ENCODE measurements at regions of chr3 and their contacts with region 1.

Region 1: GRCh38 chr3:13364602-13365271 is 55.4 kb downstream of the NUP210 start:
- DNase-seq: no peak
- H3K4me3 ChIP-seq: no peak overlapping the region
- H3K27ac ChIP-seq: no peak overlapping the region
- H3K4me1 ChIP-seq: no peaks in the 10 kb centered on the region
- H3K27me3 ChIP-seq: no peaks in the 10 kb centered on the region
- CTCF ChIP-seq: no peak

Region 2: DNA sequence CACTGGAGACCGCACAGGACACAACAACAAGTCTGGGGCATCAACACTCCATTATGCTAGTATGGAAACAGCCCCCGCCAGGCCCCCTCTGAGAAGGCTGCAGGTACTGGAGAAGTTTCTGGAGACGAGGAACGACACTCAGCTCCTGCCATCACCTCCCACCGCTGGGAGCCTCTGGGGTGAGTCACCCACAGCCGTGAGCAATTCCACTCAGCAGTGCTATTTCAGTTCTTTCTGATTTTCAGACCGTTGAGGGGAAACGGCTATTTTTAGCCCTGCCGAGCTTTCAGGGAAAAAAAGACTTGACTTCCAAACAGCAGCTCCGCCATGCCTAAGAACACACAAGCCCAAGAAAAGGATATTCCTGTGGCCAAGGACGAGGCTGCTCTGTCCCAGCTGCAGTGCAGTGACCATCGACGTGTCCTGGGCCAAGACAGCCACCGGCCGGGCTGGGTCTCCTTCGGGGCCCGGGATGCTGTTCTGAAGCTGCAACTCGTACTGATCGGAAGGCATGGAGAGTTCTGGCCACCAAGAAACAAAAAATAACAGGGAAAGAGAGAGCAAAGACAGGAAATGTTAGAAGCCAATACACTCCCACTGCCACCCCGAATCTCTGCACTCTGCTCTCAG is 14.6 kb after region 1 on chr3:
- CTCF ChIA-PET with region 1: interaction called, 11 read pairs
- dilution Hi-C with region 1: no loop called
- in situ Hi-C with region 1: no loop called
- intact Hi-C with region 1: no loop called
- DNase-seq: no peak
- H3K4me3 ChIP-seq: no peak overlapping the region
- H3K27ac ChIP-seq: no peak overlapping the region
- H3K4me1 ChIP-seq: no peaks in the 10 kb centered on the region
- H3K27me3 ChIP-seq: no peaks in the 10 kb centered on the region
- CTCF ChIP-seq: no peak

Region 3: DNA sequence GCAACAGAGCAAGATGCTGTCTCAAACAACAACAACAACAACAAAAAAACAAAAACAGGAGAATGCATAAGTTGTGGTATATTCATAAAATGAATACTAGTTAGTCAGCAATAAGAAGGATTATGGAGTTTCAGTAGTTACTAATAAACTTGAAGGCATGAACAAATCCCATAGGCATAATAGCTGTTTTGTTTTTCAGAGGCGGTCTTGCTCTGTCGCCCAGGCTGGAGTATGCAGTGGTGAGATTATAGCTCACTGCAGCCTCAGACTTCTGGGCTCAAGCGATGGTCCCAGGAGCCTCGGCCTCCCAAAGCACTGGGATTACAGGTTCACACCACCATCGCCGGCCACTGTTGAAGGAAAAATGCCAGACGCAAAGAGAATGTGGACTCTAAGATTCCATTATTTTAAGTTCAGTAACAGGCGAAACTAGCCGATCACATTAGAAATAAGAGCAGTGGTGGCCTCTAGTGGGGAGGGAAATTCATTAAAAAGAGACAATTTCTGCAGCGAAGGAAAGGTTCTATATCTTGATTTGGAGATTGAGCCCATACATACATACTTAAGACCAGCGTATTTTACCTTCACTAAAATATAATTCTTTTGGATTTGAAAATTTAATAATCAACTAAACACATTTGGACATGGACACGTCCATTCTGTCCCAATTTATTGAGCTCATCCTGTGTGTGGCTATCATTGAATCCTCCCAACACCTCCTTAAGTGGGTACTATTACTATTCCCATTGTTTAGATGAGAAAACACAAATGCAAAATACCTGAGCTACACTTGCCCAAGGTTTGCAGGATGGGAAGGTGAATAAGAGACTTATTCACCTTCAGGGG is 88.0 kb after region 1 on chr3:
- CTCF ChIA-PET with region 1: no interaction called
- dilution Hi-C with region 1: no loop called
- in situ Hi-C with region 1: no loop called
- intact Hi-C with region 1: no loop called
- DNase-seq: peak; percentile 38
- H3K4me3 ChIP-seq: no peak overlapping the region
- H3K27ac ChIP-seq: peak overlapping the region; percentile 72
- H3K4me1 ChIP-seq: peaks cover 10% of the 10 kb centered on the region
- H3K27me3 ChIP-seq: no peaks in the 10 kb centered on the region
- CTCF ChIP-seq: peak; percentile 63 to 70

Region 4: DNA sequence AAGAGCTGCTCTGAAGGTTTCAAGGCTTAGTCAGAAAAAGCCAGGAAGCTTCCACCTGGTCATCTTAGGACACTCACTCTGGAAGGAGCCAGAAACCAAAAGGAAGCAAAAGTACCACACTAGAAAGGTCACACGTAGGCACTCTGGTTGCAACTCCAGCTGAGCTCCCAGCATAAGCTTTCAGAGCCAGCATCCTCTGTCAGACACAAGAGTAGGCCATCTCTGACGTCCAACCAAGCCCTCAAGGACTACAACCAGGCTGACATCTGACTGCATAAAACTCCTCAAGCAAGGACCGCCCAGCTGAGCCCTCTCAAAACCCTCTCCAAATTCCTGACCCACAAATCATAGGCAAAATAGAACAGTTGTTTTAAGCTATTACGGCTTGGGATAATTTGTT is 1954.8 kb after region 1 on chr3:
- CTCF ChIA-PET with region 1: no interaction called
- dilution Hi-C with region 1: no loop called
- in situ Hi-C with region 1: no loop called
- intact Hi-C with region 1: no loop called
- DNase-seq: peak; percentile 34
- H3K4me3 ChIP-seq: no peak overlapping the region
- H3K27ac ChIP-seq: peak overlapping the region; percentile 14
- H3K4me1 ChIP-seq: peaks cover 34% of the 10 kb centered on the region
- H3K27me3 ChIP-seq: no peaks in the 10 kb centered on the region
- CTCF ChIP-seq: no peak

Measured in mammary epithelial cell (primary cell).